ENCODE measurements at regions of chr12 and their contacts with region 1.

Region 1: GRCh38 chr12:85424581-85425348 is 144.7 kb downstream of the ALX1 start:
- DNase-seq: peak; percentile 14
- CTCF ChIP-seq: peak; percentile 46

Region 2: DNA sequence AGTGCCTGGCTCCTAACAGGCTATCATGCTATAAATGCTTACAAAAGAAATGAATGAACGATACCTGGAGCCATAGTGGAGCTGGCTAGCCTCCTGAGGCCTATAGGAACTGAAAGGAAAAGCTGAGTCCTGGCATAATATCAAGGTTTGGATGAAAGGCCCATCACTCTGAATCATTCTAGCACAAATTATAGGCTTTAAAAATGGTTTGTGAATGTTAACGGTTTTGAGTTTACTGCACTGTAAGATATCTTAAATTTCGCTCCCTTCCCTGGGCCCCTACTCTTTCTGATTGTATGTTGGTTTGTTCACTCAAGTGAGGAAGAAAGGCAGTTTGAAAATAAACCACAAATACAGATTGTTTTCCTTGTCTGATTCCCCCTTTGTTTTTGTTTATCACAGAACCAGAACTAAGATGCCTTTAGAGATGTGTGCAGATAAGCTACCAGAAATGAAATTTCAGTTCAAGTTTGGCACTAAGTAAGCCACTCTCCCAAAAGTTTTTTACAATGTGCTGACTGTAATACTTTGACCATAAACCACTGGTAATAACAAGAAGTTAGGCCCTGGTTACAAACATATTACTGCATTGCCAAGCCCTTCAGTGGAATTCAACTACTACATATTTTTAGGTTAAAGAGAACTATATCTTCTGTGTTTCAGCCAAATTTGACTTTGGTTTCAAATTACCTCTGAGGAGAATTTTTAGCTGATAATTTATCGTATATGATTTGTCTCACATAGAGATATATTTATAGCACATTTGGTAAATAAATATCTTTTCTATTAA is 55.2 kb before region 1 on chr12:
- CTCF ChIA-PET with region 1: no interaction called
- POLR2A ChIA-PET with region 1: no interaction called
- DNase-seq: no peak
- CTCF ChIP-seq: no peak

Region 3: GRCh38 chr12:85405781-85406522 is 18.8 kb before region 1 on chr12:
- CTCF ChIA-PET with region 1: interaction called, 18 read pairs
- POLR2A ChIA-PET with region 1: no interaction called
- DNase-seq: no peak
- CTCF ChIP-seq: no peak

Region 4: DNA sequence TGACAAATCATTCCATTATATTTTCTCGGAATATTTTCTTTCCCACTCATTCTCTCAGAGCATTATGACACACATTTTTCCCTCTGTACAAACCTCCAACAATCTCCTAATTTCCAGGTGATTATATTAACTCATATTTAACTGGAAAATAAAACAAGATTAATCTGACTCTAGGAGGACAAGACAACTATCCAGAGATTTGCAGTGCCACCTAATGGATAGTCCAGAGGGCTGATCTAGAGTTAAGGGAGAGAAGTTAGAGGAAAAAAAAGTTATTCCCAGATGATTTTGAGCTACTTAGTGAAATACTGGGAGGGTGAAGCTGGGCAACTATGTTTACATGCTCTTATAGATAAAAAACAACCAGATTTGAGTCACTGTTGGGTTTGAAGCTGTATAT is 17.0 kb after region 1 on chr12:
- CTCF ChIA-PET with region 1: interaction called, 19 read pairs
- POLR2A ChIA-PET with region 1: no interaction called
- DNase-seq: no peak
- CTCF ChIP-seq: peak; percentile 43

Region 5: GRCh38 chr12:85448548-85449139 is 23.9 kb after region 1 on chr12:
- CTCF ChIA-PET with region 1: interaction called, 45 read pairs
- POLR2A ChIA-PET with region 1: no interaction called
- DNase-seq: no peak
- CTCF ChIP-seq: no peak

Region 6: GRCh38 chr12:87001102-87001501 is 1576.3 kb after region 1 on chr12:
- CTCF ChIA-PET with region 1: no interaction called
- POLR2A ChIA-PET with region 1: no interaction called
- DNase-seq: no peak
- CTCF ChIP-seq: no peak

Measured in GM10248 (cell line).